ENCODE measurements at regions of chr17 and their contacts with region 1.

Region 1: DNA sequence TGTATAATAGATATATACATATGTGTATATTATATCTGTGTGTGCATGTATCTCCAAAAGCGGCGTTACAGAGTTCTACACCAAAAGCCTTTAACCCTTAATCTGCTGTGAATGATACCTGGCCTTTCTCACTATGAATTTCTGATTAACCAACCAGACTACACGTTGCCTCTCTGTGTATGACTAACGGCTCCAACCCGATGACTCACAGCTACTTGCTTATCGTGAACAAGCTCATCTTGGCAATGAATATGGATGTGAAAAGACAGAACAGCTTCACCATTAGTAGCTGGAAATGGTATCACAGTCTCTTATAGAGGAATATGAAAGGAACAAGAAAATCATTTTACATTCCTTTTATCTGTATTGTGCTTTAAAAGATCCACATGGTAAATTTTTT is 23.8 kb upstream of the ARHGAP44 start:
- DNase-seq: peak; percentile 88
- H3K4me3 ChIP-seq: no peak overlapping the region
- H3K27ac ChIP-seq: no peak overlapping the region
- H3K4me1 ChIP-seq: no peaks in the 10 kb centered on the region
- H3K27me3 ChIP-seq: no peaks in the 10 kb centered on the region; the same call in 1 of the 2 replicates

Region 2: DNA sequence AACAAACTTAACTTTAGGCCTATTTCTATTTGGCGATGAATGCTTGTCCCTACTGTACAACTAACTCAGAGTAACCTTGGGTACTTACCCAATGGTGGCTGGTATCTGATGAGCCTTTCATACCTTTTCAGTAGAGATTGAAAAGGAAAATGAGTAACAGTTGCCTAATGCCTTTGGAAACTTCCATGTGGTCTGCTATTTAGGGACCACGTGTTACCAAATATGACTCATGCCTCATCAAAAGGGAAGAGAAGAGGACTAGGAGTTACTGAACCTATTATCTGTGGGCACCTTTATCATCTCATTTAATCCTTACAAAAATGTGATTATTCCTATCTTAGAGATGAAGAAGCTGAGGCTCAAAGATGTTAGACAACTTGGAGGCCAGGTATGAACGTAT is 91.8 kb before region 1 on chr17:
- in situ Hi-C with region 1: no loop called
- DNase-seq: peak; percentile 38
- H3K4me3 ChIP-seq: no peak overlapping the region
- H3K27ac ChIP-seq: no peak overlapping the region
- H3K4me1 ChIP-seq: no peaks in the 10 kb centered on the region
- H3K27me3 ChIP-seq: no peaks in the 10 kb centered on the region

Region 3: DNA sequence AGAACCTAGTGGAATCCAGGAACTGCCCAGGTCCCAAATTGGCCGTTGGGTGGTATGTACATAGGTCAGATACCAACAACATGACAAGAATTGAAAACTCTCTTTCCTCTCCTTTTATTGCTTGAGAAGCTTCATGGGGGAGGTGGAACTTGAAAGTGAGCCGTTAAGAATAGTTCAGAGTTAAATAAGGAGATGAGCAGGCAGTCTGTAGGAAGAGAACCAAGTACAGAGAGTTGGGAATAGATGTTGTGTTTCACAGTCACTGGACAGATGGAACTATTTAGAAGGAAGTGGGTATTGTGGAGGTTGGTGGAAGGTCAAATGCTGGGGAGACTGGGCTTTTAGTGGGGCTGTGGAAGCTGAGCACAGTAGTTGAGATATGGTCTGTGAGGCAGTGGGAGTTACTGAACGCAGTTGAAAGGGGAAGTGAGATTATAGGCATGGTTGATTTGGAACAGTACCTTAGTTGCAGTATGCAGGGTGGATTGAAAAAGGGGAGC is 50.1 kb after region 1 on chr17:
- in situ Hi-C with region 1: loop called (anchors 5 kb)
- DNase-seq: no peak
- H3K4me3 ChIP-seq: no peak overlapping the region
- H3K27ac ChIP-seq: no peak overlapping the region
- H3K4me1 ChIP-seq: no peaks in the 10 kb centered on the region
- H3K27me3 ChIP-seq: no peaks in the 10 kb centered on the region